CD8-positive, alpha-beta T cell (primary cell): ENCODE measurements at regions of chr1 and their contacts with region 1.

Region 1: DNA sequence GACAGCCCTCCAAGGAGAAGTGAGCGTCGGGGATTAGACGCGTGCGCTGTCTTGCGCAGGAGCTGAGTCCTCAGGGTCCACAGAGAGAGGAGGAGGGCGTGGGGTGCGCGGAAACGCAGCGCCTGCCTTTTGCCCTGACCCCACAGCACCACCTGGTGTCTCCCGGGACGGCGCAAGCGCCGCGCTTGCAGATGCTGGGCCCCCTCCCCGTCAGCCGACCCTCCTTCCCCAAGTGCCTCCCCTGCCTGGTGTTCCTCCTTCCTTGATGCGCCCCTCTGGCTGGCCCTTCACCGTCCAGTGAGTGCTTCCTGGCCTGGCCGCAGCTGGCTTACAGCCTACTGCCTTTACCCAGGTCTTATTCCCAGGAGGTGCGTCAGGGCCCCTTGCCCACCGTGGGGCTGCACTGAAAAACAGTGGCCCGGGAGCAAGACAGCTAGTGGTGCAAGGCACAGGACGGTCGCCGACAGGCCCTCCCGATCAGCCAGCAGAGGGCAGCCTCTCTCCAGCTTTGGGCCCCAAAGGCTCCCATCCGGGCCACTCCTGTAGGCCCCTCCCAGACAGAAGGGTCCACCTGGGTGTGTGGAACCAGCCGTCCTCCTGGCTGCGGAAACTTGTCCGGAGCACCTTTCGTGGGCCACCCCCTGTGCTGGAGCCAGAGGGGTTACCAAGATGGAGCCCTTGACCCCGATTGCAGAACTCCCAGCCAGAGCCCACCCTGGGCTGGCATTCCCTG is 12.9 kb upstream of the PHLDA3 start:
- DNase-seq: peak; percentile 65 to 85 (median 81)
- ATAC-seq: peak; percentile 86
- H3K4me3 ChIP-seq: peak overlapping the region; percentile 24 to 34
- H3K4me3 Mint-ChIP-seq: peak overlapping the region; percentile 69
- H3K27ac ChIP-seq: no peak overlapping the region
- H3K27ac Mint-ChIP-seq: no peak overlapping the region
- H3K4me1 ChIP-seq: peaks cover 19% of the 10 kb centered on the region
- H3K4me1 Mint-ChIP-seq: peaks cover 19% of the 10 kb centered on the region
- H3K27me3 ChIP-seq: peaks cover 10 to 15% of the 10 kb centered on the region in 2 experiments
- H3K27me3 Mint-ChIP-seq: peaks cover 23% of the 10 kb centered on the region
- CTCF ChIP-seq: peak; percentile 66

Region 2: GRCh38 chr1:201295861-201296260 is 186.1 kb before region 1 on chr1:
- CTCF ChIA-PET with region 1: no interaction called
- POLR2A ChIA-PET with region 1: no interaction called
- intact Hi-C with region 1: no loop called
- DNase-seq: no peak
- ATAC-seq: no peak
- H3K4me3 ChIP-seq: no peak overlapping the region
- H3K4me3 Mint-ChIP-seq: no peak overlapping the region
- H3K27ac ChIP-seq: no peak overlapping the region
- H3K27ac Mint-ChIP-seq: no peak overlapping the region
- H3K4me1 ChIP-seq: no peaks in the 10 kb centered on the region
- H3K4me1 Mint-ChIP-seq: no peaks in the 10 kb centered on the region
- H3K27me3 ChIP-seq: peaks cover 0 to 3% of the 10 kb centered on the region in 2 experiments
- H3K27me3 Mint-ChIP-seq: peaks cover 12% of the 10 kb centered on the region
- CTCF ChIP-seq: no peak

Region 3: DNA sequence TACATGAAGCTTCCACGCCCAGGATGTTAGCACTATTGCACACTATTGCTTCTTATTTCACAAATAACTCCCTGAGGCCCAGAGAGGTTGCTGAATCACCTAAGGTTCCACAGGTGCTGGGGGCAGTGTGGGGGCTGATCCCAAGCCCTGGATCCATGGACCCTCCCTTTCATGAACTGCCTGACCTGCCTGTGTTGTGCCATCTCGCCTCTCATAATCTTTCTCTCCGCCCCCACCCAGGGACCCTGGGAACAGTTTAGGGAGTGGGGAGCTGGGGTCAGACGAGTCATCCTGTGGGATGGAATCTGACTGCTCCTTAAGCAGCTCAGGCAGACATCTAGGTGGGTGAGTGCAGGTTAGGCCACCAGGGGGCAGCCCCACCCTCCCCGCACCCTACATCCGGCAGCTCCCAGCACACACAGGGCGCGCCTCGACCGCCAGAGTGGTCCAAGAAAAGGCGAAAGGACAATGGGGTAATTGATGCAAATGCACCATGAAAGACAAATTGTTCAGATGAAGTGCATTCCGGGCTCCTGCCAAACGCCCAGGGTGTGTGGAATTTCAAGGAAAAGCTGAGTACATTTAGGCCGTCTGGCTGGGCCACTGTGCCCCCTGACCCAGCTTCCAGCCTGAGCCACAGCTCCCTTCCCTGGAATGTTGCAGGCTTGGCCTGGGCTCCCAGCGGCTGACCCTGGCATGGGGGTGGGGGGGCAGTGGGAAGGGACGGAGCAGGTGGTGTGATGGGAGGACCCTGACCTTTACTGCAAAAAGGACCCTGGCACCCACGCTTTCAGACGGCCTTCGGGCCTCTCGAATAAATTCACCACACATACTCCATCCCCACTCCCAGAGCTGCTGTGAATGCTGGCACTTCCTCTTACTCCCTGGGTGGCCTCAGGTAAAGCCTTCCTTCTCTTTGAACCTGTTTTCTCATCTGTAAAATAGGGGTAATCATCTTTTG is 33.7 kb before region 1 on chr1:
- CTCF ChIA-PET with region 1: interaction called, 37 read pairs
- POLR2A ChIA-PET with region 1: no interaction called
- intact Hi-C with region 1: loop called in 1 of 2 experiments (anchors 1 kb)
- DNase-seq: peak; percentile 16 to 70 (median 53)
- ATAC-seq: peak; percentile 79
- H3K4me3 ChIP-seq: no peak overlapping the region
- H3K4me3 Mint-ChIP-seq: no peak overlapping the region
- H3K27ac ChIP-seq: no peak overlapping the region
- H3K27ac Mint-ChIP-seq: no peak overlapping the region
- H3K4me1 ChIP-seq: no peaks in the 10 kb centered on the region
- H3K4me1 Mint-ChIP-seq: no peaks in the 10 kb centered on the region
- H3K27me3 ChIP-seq: no peaks in the 10 kb centered on the region
- H3K27me3 Mint-ChIP-seq: peaks cover 7% of the 10 kb centered on the region
- CTCF ChIP-seq: peak; percentile 53

Region 4: GRCh38 chr1:201506556-201507359 is 24.8 kb after region 1 on chr1 and contains the start of gene CSRP1:
- CTCF ChIA-PET with region 1: interaction called, 577 read pairs
- POLR2A ChIA-PET with region 1: interaction called, 19 read pairs
- intact Hi-C with region 1: loop called (anchors 1 kb)
- DNase-seq: peak; percentile 51 to 88 (median 78)
- ATAC-seq: peak; percentile 96
- H3K4me3 ChIP-seq: peak within 1 kb of the TSS; percentile 77 to 94
- H3K4me3 Mint-ChIP-seq: peak within 1 kb of the TSS; percentile 87
- H3K27ac ChIP-seq: peak within 1 kb of the TSS; percentile 65 to 70
- H3K27ac Mint-ChIP-seq: peak within 1 kb of the TSS; percentile 88
- H3K4me1 ChIP-seq: peaks cover 26% of the 10 kb centered on the region
- H3K4me1 Mint-ChIP-seq: peaks cover 50% of the 10 kb centered on the region
- H3K27me3 ChIP-seq: no peaks in the 10 kb centered on the region
- H3K27me3 Mint-ChIP-seq: no peaks in the 10 kb centered on the region
- CTCF ChIP-seq: no peak
- total RNA-seq, gene CSRP1: 31.6 to 33.9 TPM

Region 5: DNA sequence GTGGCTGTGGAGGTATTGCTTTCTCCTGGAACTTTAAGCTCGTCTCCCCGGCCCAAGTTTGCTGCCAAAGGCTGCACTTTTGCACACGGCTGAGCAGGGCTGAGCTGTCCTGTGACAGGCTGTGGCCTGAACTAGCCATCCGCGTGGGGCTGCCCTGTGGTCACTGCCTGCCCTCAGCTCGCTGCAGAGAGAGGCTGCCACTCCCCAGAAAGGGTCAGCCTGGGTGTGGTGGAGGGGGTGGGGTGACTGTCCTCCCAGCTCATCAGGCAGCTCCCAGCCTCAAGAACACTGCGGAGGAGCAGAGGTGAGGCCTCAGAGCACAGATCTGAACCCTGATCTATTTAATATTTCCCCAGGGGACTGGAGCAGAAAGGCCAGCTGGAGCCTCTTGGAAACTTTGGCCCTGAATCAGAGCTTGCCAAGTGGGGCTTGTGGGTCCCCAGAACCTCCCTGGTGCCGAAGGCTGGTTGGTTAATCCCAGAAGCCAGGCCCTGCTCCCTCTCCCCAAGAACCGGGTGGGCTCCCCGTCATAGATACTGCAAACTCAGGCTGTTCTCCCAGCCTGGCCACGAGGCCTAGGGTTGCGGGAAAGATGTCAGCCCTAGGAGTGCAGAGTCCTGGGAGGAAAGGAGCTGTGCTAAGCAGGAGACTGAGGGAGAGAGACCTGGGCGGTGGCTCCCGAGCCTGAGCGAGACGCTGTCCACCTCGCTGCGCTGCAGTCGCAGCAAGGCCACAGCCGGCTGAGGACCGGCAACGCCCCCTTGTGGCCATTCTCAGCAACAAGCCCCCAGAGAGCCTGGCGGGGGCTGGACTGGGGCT is 221.9 kb after region 1 on chr1:
- CTCF ChIA-PET with region 1: interaction called, 3 read pairs
- POLR2A ChIA-PET with region 1: no interaction called
- intact Hi-C with region 1: loop called in 1 of 2 experiments (anchors 2 kb)
- DNase-seq: peak; percentile 27 to 73 (median 60)
- ATAC-seq: peak; percentile 40
- H3K4me3 ChIP-seq: no peak overlapping the region
- H3K4me3 Mint-ChIP-seq: no peak overlapping the region
- H3K27ac ChIP-seq: no peak overlapping the region
- H3K27ac Mint-ChIP-seq: no peak overlapping the region
- H3K4me1 ChIP-seq: no peaks in the 10 kb centered on the region
- H3K4me1 Mint-ChIP-seq: no peaks in the 10 kb centered on the region
- H3K27me3 ChIP-seq: no peaks in the 10 kb centered on the region
- H3K27me3 Mint-ChIP-seq: no peaks in the 10 kb centered on the region
- CTCF ChIP-seq: peak; percentile 68